IMR-90 (cell line): ENCODE measurements at regions of chr10 and their contacts with region 1.

Region 1: GRCh38 chr10:127196230-127196954 is at the start of gene INSYN2A:
- DNase-seq: peak; percentile 44
- ATAC-seq: peak; percentile 77
- H3K4me3 ChIP-seq: peak within 1 kb of the TSS; percentile 44
- H3K27ac ChIP-seq: no peak within 1 kb of the TSS; the same call in 1 of the 2 replicates
- H3K4me1 ChIP-seq: peaks cover 8% of the 10 kb centered on the region; the same call in 1 of the 2 replicates
- H3K27me3 ChIP-seq: no peaks in the 10 kb centered on the region; the same call in 1 of the 2 replicates
- CTCF ChIP-seq: peak; percentile 39
- POLR2A ChIP-seq: no peak
- RAD21 ChIP-seq: peak; percentile 34
- total RNA-seq, gene INSYN2A: under 0.01 and 0.18 TPM in 2 replicates

Region 2: GRCh38 chr10:126979311-126979710 is 217.1 kb before region 1 on chr10:
- CTCF ChIA-PET with region 1: no interaction called
- POLR2A ChIA-PET with region 1: interaction called, 19 read pairs
- dilution Hi-C with region 1: no loop called
- in situ Hi-C with region 1: no loop called
- intact Hi-C with region 1: no loop called
- DNase-seq: no peak
- ATAC-seq: no peak
- H3K4me3 ChIP-seq: no peak overlapping the region
- H3K27ac ChIP-seq: no peak overlapping the region
- H3K4me1 ChIP-seq: peaks cover 4% of the 10 kb centered on the region; the same call in 1 of the 2 replicates
- H3K27me3 ChIP-seq: no peaks in the 10 kb centered on the region
- CTCF ChIP-seq: no peak
- POLR2A ChIP-seq: no peak
- RAD21 ChIP-seq: no peak

Region 3: GRCh38 chr10:127088908-127089307 is 107.5 kb before region 1 on chr10:
- CTCF ChIA-PET with region 1: no interaction called
- POLR2A ChIA-PET with region 1: no interaction called
- dilution Hi-C with region 1: no loop called
- in situ Hi-C with region 1: no loop called
- intact Hi-C with region 1: loop called (anchors 5 kb)
- DNase-seq: no peak
- ATAC-seq: no peak
- H3K4me3 ChIP-seq: no peak overlapping the region
- H3K27ac ChIP-seq: no peak overlapping the region
- H3K4me1 ChIP-seq: peaks cover 4% of the 10 kb centered on the region; the same call in 1 of the 2 replicates
- H3K27me3 ChIP-seq: no peaks in the 10 kb centered on the region
- CTCF ChIP-seq: no peak
- POLR2A ChIP-seq: no peak
- RAD21 ChIP-seq: no peak

Region 4: DNA sequence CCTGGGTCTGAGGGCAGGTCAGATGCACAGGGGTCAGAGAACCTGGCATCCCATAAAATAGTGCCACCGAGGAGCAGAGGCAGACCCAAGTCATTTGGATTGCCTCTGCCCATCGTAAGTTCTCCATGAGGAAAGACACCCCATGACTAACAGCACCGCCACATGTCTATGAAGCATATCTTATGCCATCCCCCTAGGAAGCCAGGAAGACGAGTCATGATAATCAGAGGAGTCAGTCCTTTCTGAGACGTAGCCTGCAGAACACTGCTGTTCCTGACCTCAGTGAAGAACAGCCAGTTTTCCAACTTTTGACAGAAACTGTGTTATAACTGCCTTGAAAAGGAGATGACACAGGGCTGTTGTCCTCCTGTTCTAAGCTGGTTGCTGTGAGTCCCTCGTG is 51.2 kb before region 1 on chr10:
- CTCF ChIA-PET with region 1: no interaction called
- POLR2A ChIA-PET with region 1: no interaction called
- dilution Hi-C with region 1: no loop called
- in situ Hi-C with region 1: no loop called
- intact Hi-C with region 1: no loop called
- DNase-seq: peak; percentile 91
- ATAC-seq: peak; percentile 72
- H3K4me3 ChIP-seq: no peak overlapping the region
- H3K27ac ChIP-seq: peak overlapping the region; percentile 49
- H3K4me1 ChIP-seq: peaks cover 21% of the 10 kb centered on the region
- H3K27me3 ChIP-seq: no peaks in the 10 kb centered on the region
- CTCF ChIP-seq: no peak
- POLR2A ChIP-seq: no peak
- RAD21 ChIP-seq: no peak; the same call in 1 of the 2 replicates

Region 5: DNA sequence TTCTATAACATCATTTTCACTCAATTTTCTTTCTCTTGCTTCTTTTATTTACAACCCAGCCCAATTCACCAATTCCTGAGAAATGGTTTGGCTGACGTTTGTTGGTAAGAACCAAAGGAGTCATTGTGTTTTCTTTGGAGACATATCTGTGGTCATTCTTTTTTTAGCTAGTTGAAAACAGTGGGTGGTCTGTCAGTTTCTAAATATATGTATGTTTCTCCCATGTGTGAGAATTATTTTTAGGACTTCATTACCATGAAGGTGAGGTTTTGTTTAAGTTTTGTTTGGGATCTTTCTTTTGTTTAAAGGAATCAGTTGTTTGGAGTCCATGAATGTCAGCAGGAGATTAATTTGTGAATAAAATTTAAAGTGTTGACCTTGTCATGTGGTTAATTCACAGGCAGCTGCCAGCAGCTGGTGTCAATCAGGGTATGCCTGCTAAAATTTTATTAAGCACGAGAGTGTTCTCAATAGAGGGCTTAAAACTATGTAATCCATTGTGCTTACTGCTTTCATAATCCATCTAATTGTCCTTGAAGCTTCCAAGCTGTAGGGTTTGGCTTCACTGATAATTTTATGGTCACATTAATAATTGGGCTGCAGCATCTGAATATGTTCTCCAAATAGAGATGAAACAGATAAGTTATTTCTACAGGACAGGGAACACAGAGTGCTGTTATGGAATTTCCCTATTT is 38.7 kb before region 1 on chr10:
- CTCF ChIA-PET with region 1: no interaction called
- POLR2A ChIA-PET with region 1: no interaction called
- dilution Hi-C with region 1: no loop called
- in situ Hi-C with region 1: no loop called
- intact Hi-C with region 1: loop called (anchors 2 kb)
- DNase-seq: peak; percentile 23
- ATAC-seq: no peak
- H3K4me3 ChIP-seq: no peak overlapping the region
- H3K27ac ChIP-seq: no peak overlapping the region
- H3K4me1 ChIP-seq: peaks cover 10% of the 10 kb centered on the region
- H3K27me3 ChIP-seq: no peaks in the 10 kb centered on the region
- CTCF ChIP-seq: no peak
- POLR2A ChIP-seq: no peak
- RAD21 ChIP-seq: no peak

Region 6: DNA sequence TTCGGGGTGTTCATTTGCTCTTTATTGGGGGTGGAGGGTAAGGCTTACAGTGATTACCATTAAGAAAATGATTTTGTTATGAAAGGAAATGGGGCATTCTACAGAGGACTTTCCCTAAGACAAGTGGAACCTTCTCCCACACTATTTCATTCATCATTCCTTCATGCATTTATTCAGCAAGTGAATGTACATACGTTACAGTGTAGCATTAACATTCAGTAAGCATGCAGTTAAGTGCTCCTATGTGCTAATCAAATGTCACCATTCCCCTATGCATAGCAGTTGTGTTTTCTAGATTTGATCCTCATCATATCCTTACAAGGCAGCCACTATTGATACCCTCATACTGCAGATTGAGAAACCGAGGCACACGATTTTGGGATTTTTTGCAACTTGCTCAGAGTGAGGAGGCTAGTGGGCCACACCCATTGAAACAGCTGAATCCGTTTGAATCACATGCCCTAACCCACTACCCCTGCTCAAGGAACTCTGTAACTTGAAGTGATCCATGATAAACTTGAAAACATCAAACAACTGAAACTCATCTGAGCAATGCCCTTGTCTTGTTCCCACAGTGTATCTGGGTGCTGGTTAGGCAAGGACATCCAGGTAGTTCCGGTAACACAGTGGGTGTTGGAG is 16.7 kb before region 1 on chr10:
- CTCF ChIA-PET with region 1: interaction called, 12 read pairs
- POLR2A ChIA-PET with region 1: no interaction called
- dilution Hi-C with region 1: no loop called
- in situ Hi-C with region 1: no loop called
- intact Hi-C with region 1: no loop called
- DNase-seq: no peak
- ATAC-seq: no peak
- H3K4me3 ChIP-seq: no peak overlapping the region
- H3K27ac ChIP-seq: no peak overlapping the region
- H3K4me1 ChIP-seq: no peaks in the 10 kb centered on the region
- H3K27me3 ChIP-seq: no peaks in the 10 kb centered on the region
- CTCF ChIP-seq: no peak
- POLR2A ChIP-seq: no peak
- RAD21 ChIP-seq: no peak

Region 7: DNA sequence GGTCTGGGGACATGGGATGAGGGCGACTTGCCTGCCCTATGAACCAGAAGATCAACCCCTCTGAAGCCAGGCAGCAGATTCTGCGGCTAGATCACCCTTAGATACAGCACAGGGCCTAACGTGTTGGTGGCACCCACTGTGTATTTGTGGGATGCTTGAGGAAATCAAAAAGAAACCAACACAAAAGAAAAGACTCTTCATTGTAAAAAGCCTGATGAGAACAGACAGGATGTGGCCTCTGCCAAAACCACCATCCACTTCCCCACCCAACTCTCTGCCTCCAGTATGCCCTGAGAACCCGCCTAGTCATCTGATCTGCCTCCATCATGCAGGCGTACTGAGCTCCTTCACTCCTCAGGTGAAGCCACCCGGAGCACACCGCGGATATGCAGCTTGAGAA is 97.2 kb after region 1 on chr10:
- CTCF ChIA-PET with region 1: no interaction called
- POLR2A ChIA-PET with region 1: no interaction called
- dilution Hi-C with region 1: no loop called
- in situ Hi-C with region 1: no loop called
- intact Hi-C with region 1: no loop called
- DNase-seq: no peak
- ATAC-seq: no peak
- H3K4me3 ChIP-seq: no peak overlapping the region
- H3K27ac ChIP-seq: no peak overlapping the region
- H3K4me1 ChIP-seq: no peaks in the 10 kb centered on the region
- H3K27me3 ChIP-seq: no peaks in the 10 kb centered on the region
- CTCF ChIP-seq: no peak
- POLR2A ChIP-seq: no peak
- RAD21 ChIP-seq: no peak

Region 8: GRCh38 chr10:127424594-127425264 is 228.3 kb after region 1 on chr10:
- CTCF ChIA-PET with region 1: no interaction called
- POLR2A ChIA-PET with region 1: no interaction called
- dilution Hi-C with region 1: no loop called
- in situ Hi-C with region 1: no loop called
- intact Hi-C with region 1: loop called (anchors 10 kb)
- DNase-seq: peak; percentile 51
- ATAC-seq: peak; percentile 82
- H3K4me3 ChIP-seq: no peak overlapping the region
- H3K27ac ChIP-seq: peak overlapping the region; percentile 27; the same call in 1 of the 2 replicates
- H3K4me1 ChIP-seq: peaks cover 5% of the 10 kb centered on the region
- H3K27me3 ChIP-seq: no peaks in the 10 kb centered on the region
- CTCF ChIP-seq: no peak
- POLR2A ChIP-seq: no peak
- RAD21 ChIP-seq: no peak

Region 9: DNA sequence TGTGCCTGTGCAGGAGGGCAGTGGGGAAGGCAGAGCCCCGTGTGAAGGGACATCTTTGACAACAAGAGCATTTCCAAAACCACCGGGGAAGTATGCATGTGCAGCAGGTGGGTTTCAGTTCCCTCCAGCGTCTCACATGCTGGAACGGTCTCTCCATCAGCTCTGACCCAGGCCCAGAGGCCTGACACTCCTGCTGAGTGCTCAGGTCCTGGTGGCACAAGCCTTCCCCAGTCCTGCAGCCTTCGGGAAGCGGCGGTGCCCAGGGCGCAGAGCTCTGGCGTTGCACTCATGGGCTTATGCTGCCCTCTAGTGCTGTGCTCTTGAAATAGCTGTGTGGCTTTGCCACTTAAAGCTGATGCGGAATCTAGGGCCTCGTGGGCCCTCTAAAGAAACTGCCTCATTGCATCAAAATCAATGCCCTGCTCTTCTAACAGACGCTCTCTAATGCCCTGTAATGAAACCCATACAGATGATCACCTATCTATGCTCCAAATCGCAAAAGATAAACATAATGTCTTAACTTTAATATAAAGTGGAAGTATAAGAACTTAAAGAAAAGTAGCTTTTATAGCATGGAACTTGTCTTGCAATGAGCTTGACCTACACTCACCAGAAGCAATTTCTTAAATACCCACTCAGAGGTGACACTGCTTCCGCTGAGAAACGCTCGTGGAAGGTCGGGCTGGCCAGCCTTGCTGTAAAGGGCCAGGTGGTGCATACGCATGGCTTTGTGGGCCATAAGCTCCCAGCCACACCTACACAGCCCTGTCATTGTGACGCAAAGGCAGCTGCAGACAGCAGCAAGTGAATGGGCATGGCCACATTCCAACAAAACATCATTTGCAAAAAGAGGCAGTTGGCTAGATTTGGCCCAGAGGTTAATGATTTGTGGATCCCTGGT is 657.7 kb after region 1 on chr10:
- CTCF ChIA-PET with region 1: no interaction called
- POLR2A ChIA-PET with region 1: no interaction called
- dilution Hi-C with region 1: no loop called
- in situ Hi-C with region 1: no loop called
- intact Hi-C with region 1: loop called (anchors 5 kb)
- DNase-seq: peak; percentile 47
- ATAC-seq: peak; percentile 99
- H3K4me3 ChIP-seq: no peak overlapping the region
- H3K27ac ChIP-seq: no peak overlapping the region
- H3K4me1 ChIP-seq: no peaks in the 10 kb centered on the region
- H3K27me3 ChIP-seq: no peaks in the 10 kb centered on the region
- CTCF ChIP-seq: peak; percentile 62
- POLR2A ChIP-seq: no peak
- RAD21 ChIP-seq: peak; percentile 77